ENCODE measurements at regions of chr14 and their contacts with region 1.

Region 1: GRCh38 chr14:98138666-98139065 is 1133.3 kb downstream of the BCL11B start:
- DNase-seq: peak; percentile 81
- ATAC-seq: peak; percentile 70
- H3K4me3 Mint-ChIP-seq: peak overlapping the region; percentile 9
- H3K27ac Mint-ChIP-seq: peak overlapping the region; percentile 66
- H3K4me1 Mint-ChIP-seq: peaks cover 81% of the 10 kb centered on the region
- H3K27me3 Mint-ChIP-seq: no peaks in the 10 kb centered on the region

Region 2: DNA sequence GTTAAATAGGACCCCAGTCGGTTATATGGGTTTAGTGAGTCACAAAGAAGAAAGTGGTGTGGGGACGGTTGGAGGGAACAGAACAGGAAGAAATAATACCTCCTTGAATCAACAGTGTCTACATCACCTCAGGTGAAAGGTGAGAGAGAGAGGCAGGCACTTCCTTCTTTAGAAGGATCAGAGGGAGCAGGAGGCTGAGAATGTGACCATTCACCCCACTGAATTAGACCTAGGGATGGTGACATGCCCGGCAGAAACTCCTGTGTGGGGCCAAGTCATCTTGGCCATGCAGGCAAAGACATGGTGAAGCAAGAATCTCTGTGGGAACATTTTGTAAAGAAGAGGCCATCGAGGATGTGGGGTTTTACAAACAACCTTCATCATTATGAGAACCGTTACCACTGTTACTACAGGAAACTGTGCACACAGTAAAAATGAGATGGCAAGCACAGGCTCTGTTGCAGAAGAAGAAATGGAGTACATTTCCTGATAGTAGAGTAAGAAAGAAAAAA is 144.6 kb before region 1 on chr14:
- CTCF ChIA-PET with region 1: interaction called, 12 read pairs
- POLR2A ChIA-PET with region 1: interaction called, 3 read pairs
- DNase-seq: peak; percentile 42
- ATAC-seq: peak; percentile 76
- H3K4me3 Mint-ChIP-seq: peak overlapping the region; percentile 1
- H3K27ac Mint-ChIP-seq: peak overlapping the region; percentile 90
- H3K4me1 Mint-ChIP-seq: peaks cover 31% of the 10 kb centered on the region
- H3K27me3 Mint-ChIP-seq: no peaks in the 10 kb centered on the region

Region 3: GRCh38 chr14:98085751-98086150 is 52.9 kb before region 1 on chr14:
- CTCF ChIA-PET with region 1: no interaction called
- POLR2A ChIA-PET with region 1: no interaction called
- DNase-seq: no peak
- ATAC-seq: no peak
- H3K4me3 Mint-ChIP-seq: no peak overlapping the region
- H3K27ac Mint-ChIP-seq: no peak overlapping the region
- H3K4me1 Mint-ChIP-seq: no peaks in the 10 kb centered on the region
- H3K27me3 Mint-ChIP-seq: no peaks in the 10 kb centered on the region

Region 4: DNA sequence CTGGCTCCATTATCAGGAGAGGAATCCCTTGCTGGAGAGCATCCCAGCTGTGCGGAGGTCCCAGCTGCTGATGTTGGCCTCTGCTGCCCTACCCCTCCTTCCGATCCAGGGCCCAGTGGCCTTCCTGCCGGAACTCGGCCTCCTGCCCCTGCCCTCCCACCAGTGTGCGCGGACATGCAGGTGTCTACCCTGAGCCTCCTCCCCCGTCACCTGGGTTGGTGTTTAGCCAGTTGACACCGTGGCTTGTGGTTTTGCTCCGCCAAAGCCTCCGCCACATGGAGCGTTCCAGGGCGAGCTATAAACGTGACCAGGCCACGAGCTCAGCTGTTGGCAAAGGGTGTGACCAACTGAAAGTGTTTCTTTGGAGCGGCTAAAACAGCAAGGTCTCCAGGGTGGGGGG is 29.0 kb after region 1 on chr14:
- CTCF ChIA-PET with region 1: interaction called, 66 read pairs
- POLR2A ChIA-PET with region 1: interaction called, 3 read pairs
- DNase-seq: peak; percentile 59
- ATAC-seq: peak; percentile 52
- H3K4me3 Mint-ChIP-seq: peak overlapping the region; percentile 26
- H3K27ac Mint-ChIP-seq: peak overlapping the region; percentile 50
- H3K4me1 Mint-ChIP-seq: peaks cover 84% of the 10 kb centered on the region
- H3K27me3 Mint-ChIP-seq: no peaks in the 10 kb centered on the region

Region 5: GRCh38 chr14:98189062-98189461 is 50.4 kb after region 1 on chr14:
- CTCF ChIA-PET with region 1: interaction called, 309 read pairs
- POLR2A ChIA-PET with region 1: interaction called, 44 read pairs
- DNase-seq: peak; percentile 68
- ATAC-seq: peak; percentile 69
- H3K4me3 Mint-ChIP-seq: peak overlapping the region; percentile 58
- H3K27ac Mint-ChIP-seq: peak overlapping the region; percentile 92
- H3K4me1 Mint-ChIP-seq: peaks cover 96% of the 10 kb centered on the region
- H3K27me3 Mint-ChIP-seq: no peaks in the 10 kb centered on the region

Region 6: DNA sequence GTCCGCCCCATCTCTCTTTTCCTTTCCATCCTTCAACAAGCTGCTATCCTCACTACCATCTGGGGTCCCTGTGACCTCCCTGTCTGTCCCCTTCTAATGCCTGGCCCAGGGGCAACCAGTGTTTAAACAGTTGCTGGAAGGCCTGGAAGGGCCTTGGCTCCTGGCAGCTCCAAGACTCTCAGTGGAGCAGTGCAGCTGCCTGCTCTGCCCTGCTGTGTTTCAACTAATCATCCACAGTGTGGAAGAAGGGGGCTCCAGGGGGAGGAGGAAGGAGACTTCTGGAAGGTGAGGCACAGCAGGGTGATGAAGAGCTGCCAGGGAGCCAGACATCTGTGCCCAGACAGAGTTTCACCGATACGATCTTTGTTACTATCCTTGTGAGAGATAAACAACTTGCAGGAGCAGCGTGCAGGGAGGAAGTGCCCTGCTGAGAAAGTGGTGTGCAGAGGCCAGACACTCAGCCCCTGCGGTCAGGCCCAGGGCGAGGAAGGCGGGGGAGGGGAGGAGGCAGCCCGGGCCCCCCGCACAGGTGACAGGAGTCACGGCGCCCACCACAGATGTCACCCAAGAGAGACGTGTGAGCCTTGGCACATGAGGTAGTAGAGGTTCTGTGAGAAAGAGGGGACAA is 71.5 kb after region 1 on chr14:
- CTCF ChIA-PET with region 1: interaction called, 14 read pairs
- POLR2A ChIA-PET with region 1: no interaction called
- DNase-seq: peak; percentile 59
- ATAC-seq: peak; percentile 65
- H3K4me3 Mint-ChIP-seq: peak overlapping the region; percentile 53
- H3K27ac Mint-ChIP-seq: peak overlapping the region; percentile 87
- H3K4me1 Mint-ChIP-seq: peaks cover 68% of the 10 kb centered on the region
- H3K27me3 Mint-ChIP-seq: no peaks in the 10 kb centered on the region

Region 7: DNA sequence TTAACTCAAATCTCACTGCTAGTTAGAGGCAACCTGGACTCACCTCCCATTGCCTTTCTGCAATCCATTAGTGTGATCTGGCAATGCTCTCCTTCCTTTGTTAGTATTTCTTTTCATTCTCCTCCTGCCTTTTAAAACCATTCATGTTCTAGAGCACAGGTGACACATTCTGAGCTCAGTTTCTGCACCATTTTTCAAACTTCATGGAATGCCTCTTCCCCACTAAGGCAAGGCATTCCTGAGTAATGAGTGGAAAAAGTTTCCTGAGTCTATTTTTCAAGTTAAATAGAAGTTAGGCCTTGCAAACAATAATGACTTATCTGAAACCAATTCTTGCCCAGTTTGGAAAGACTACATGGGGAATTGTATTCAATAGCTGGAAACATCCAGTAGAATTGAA is 131.5 kb after region 1 on chr14:
- CTCF ChIA-PET with region 1: no interaction called
- POLR2A ChIA-PET with region 1: no interaction called
- DNase-seq: no peak
- ATAC-seq: no peak
- H3K4me3 Mint-ChIP-seq: no peak overlapping the region
- H3K27ac Mint-ChIP-seq: no peak overlapping the region
- H3K4me1 Mint-ChIP-seq: peaks cover 4% of the 10 kb centered on the region
- H3K27me3 Mint-ChIP-seq: no peaks in the 10 kb centered on the region

Region 8: GRCh38 chr14:99192028-99192621 is 1053.5 kb after region 1 on chr14:
- CTCF ChIA-PET with region 1: interaction called, 21 read pairs
- POLR2A ChIA-PET with region 1: interaction called, 3 read pairs
- DNase-seq: peak; percentile 56
- ATAC-seq: peak; percentile 20
- H3K4me3 Mint-ChIP-seq: peak overlapping the region; percentile 88
- H3K27ac Mint-ChIP-seq: peak overlapping the region; percentile 95
- H3K4me1 Mint-ChIP-seq: peaks cover 93% of the 10 kb centered on the region
- H3K27me3 Mint-ChIP-seq: no peaks in the 10 kb centered on the region

Region 9: DNA sequence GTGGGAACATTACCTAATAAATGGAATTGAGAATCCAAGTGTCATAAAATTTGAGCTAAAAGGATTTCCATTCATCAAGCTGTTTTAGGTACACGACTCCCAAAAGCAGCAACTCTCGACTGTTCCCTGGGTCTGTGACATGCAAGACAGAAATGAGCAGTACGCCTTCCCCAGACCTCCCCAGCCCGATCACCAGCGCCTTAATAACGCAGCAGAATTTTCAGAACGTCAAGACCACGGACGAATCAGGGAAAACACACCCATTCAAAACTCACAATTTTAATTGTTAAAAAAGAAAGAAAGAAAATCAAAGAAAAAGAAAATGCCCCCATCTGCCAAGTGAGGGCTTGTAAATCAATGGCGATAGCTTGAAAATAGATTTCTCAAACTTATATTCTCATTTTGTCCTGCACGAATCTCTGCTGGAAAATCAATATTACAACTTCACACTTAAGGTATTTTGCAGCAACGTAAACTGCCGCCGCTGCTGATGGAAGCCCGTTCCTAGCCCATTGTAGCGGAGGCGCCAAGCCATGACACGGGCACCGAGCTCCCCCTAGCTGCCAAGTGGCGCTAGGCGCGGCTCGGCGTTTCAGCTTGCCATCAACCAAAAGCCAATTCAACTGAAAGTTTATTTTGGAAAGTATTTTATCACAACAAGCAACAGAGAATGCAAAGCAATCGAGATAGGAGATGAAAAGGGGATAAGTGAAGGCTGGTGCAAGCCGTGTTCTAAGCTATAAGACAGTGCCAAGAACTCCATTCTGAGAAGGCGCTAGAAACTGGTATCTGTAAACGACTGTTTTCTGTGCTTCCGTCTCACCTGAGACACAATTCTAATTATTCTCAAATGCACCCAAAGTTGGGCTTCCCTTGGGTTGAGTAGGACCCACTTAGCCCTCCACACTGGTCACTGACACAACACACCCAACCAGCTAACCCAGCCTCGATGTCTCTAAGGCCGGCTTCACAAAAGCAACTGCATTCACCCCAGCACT is 1127.8 kb after region 1 on chr14:
- CTCF ChIA-PET with region 1: interaction called, 75 read pairs
- POLR2A ChIA-PET with region 1: interaction called, 6 read pairs
- DNase-seq: peak; percentile 93
- ATAC-seq: peak; percentile 28
- H3K4me3 Mint-ChIP-seq: peak overlapping the region; percentile 88
- H3K27ac Mint-ChIP-seq: peak overlapping the region; percentile 98
- H3K4me1 Mint-ChIP-seq: peaks cover 59% of the 10 kb centered on the region
- H3K27me3 Mint-ChIP-seq: no peaks in the 10 kb centered on the region